Lower lobe of right lung (tissue), 2 donors: ENCODE measurements at regions of chr9 and their contacts with region 1.

Region 1: GRCh38 chr9:6566409-6567139 is 79.0 kb downstream of the GLDC start:
- DNase-seq: no peak
- ATAC-seq: peak in 1 of 2 donors; percentile 41
- H3K4me3 ChIP-seq: no peak overlapping the region
- H3K27ac ChIP-seq: no peak overlapping the region
- H3K4me1 ChIP-seq: no peaks in the 10 kb centered on the region
- H3K27me3 ChIP-seq: no peaks in the 10 kb centered on the region
- CTCF ChIP-seq: no peak

Region 2: GRCh38 chr9:6353851-6354686 is 212.5 kb before region 1 on chr9:
- intact Hi-C with region 1: loop called (anchors 10 kb)
- DNase-seq: no peak
- ATAC-seq: peak; percentile 85
- H3K4me3 ChIP-seq: no peak overlapping the region
- H3K27ac ChIP-seq: no peak overlapping the region
- H3K4me1 ChIP-seq: no peaks in the 10 kb centered on the region
- H3K27me3 ChIP-seq: no peaks in the 10 kb centered on the region
- CTCF ChIP-seq: peak; percentile 73